ENCODE measurements at regions of chr4 and their contacts with region 1.

Region 1: DNA sequence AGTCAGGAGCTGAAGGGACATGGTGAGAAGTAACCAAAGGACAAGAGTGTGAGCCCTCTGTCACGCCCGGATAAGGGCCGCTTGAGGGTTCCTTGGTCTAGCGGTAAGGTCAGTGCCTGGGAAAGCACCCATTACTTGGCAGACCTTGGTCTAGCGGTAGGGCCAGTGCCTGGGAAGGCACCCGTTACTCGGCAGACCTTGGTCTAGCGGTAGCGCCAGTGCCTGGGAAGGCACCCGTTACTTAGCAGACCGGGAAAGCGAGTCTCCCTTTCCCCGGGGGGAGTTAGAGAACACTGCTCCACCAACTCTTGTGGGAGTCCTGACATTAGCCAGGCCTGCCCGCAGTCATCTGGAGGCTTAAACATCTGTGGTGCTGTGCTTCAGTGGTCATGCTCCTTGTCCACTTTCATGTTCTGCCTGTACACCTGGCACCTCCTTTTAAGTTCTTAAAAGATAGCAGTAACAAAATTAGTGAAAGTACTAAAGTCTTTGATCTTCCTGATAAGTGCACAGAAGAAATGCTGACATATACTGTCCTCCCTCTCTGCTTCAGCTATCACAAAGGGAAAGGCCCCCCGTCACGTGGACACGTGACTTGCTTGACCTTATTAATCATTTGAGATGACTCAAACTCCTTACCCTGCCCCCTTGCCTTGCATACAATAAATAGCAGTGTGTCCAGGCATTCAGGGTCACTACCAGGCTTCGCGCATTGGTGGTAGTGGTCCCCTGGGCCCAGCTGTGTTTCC is 9.3 kb upstream of the SEC24B start:
- DNase-seq: no peak
- H3K4me3 ChIP-seq: no peak overlapping the region
- H3K27ac ChIP-seq: no peak overlapping the region
- H3K4me1 ChIP-seq: no peaks in the 10 kb centered on the region
- H3K27me3 ChIP-seq: no peaks in the 10 kb centered on the region
- CTCF ChIP-seq: no peak
- POLR2A ChIP-seq: no peak

Region 2: DNA sequence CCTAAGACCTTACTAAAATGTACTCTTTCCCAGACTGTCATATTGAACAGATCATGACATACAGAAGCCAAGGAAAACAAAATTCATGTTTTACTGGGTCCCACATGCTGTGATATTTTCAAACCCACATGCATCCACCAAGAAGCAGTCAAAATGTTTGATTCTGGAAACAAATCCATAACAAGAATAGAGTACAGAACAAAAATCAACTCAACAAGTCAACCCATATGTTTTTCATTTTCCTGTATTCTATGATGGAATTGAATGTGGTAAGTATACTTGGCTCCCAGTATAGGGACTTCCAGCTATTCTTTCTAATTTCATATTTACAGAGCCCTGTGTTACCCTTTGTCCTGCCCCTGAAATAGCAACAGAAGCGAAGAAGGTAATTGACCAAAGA is 228.6 kb before region 1 on chr4:
- intact Hi-C with region 1: no loop called
- DNase-seq: no peak
- H3K4me3 ChIP-seq: no peak overlapping the region
- H3K27ac ChIP-seq: no peak overlapping the region
- H3K4me1 ChIP-seq: no peaks in the 10 kb centered on the region
- H3K27me3 ChIP-seq: no peaks in the 10 kb centered on the region
- CTCF ChIP-seq: no peak
- POLR2A ChIP-seq: no peak

Region 3: GRCh38 chr4:109815151-109816081 is 391.1 kb after region 1 on chr4 and contains the start of gene GAR1:
- intact Hi-C with region 1: loop called (anchors 5 kb)
- DNase-seq: peak; percentile 84 to 89
- H3K4me3 ChIP-seq: peak within 1 kb of the TSS; percentile 69 to 80
- H3K27ac ChIP-seq: peak within 1 kb of the TSS; percentile 79 to 85
- H3K4me1 ChIP-seq: no peaks in the 10 kb centered on the region
- H3K27me3 ChIP-seq: no peaks in the 10 kb centered on the region
- CTCF ChIP-seq: peak in 1 of 4 experiments; percentile 6
- POLR2A ChIP-seq: peak; percentile 31 to 51
- total RNA-seq, gene GAR1: 8.2 to 12.1 (median 9.2) TPM in 3 of 4 donors, not detected in the other